GM18951 (cell line): ENCODE measurements at regions of chr3 and their contacts with region 1.

Region 1: DNA sequence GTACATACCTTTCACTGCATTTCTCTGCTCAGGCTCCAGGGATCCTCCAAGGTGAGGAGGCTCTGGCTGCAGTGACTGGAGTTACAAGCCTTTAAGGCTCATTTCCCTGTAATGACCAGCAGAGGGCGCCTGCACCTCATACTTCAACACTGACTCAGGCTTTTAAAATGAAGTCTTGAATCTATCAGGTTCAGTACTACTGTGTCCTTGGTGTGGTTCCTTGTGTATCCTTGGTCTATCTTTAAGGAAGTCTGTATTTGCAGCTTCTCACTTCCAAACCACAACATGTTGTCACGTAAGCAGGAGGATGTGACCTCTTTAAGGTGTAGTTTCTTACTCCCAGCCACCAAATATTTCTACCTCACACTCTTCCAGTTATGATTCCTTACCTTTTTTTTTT is 122.5 kb upstream of the ZBED2 start:
- POLR2A ChIP-seq: no peak

Region 2: DNA sequence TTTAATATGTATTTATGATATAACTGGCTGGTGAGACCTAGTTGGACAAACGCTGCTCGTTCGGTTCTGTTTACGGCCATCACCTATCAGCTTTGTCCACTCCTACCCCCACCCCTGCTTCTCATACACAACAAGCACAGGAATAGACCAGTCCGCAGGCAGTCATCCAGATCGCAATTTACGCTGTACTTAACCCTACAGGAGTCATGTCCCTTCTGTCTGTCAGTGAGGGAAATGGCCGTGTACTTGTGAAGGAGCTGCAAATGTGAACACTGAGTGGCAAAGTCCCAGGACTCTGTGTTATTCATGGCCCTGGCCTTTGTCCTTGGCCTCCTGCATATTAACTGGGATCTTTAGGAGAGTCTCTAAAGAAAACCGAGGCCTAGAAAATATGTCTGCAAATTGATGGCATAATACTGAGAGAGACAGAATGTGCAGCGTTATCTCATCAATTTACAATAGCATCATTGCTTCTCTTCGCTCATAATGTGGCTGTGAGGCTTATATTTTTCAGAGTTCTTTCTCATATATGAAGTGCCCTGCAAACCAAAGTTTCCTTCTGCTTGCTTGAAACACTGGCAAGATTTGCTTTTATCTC is 254.0 kb after region 1 on chr3:
- in situ Hi-C with region 1: loop called (anchors 5 kb)
- POLR2A ChIP-seq: no peak